Transverse colon (tissue), 4 donors: ENCODE measurements at regions of chr1 and their contacts with region 1.

Region 1: DNA sequence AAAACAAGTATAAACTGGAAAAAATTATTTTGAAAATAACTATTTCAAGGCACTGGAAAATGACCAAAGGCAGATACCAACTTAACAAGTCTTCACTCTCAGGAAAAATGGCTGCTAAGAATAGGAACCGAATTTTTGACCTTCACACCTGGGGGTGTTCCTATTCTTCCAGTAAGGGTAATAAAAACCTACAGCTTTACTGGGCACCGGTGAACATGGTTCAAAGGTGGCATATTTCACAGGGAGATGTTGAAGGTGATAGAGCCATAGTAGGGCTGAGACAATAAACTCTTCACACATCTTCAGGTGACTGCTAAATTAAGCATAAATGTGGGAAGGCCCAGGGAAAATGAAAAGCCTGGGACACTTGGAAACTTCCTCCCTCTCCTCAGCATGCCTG is 65.4 kb upstream of the IFFO2 start:
- DNase-seq: no peak
- H3K4me3 ChIP-seq: no peak overlapping the region
- H3K27ac ChIP-seq: peak overlapping the region in 2 of 4 donors; percentile 27 to 48
- H3K4me1 ChIP-seq: peaks cover 0 to 10% (median 0%) of the 10 kb centered on the region in 4 donors
- H3K27me3 ChIP-seq: no peaks in the 10 kb centered on the region
- CTCF ChIP-seq: no peak
- EP300 ChIP-seq: no peak
- POLR2A ChIP-seq: no peak

Region 2: GRCh38 chr1:17849216-17849615 is 1172.6 kb before region 1 on chr1:
- in situ Hi-C with region 1: no loop called
- intact Hi-C with region 1: loop called (anchors 5 kb)
- DNase-seq: no peak
- H3K4me3 ChIP-seq: no peak overlapping the region
- H3K27ac ChIP-seq: no peak overlapping the region
- H3K4me1 ChIP-seq: no peaks in the 10 kb centered on the region
- H3K27me3 ChIP-seq: peaks cover 10% of the 10 kb centered on the region
- CTCF ChIP-seq: no peak
- EP300 ChIP-seq: no peak
- POLR2A ChIP-seq: no peak